ENCODE measurements at regions of chr1 and their contacts with region 1.

Region 1: GRCh38 chr1:225349826-225350225 is 78.0 kb downstream of the LBR start:
- DNase-seq: no peak
- H3K4me3 Mint-ChIP-seq: no peak overlapping the region
- H3K27ac Mint-ChIP-seq: peak overlapping the region; percentile 63
- H3K4me1 Mint-ChIP-seq: peaks cover 28% of the 10 kb centered on the region
- H3K27me3 Mint-ChIP-seq: no peaks in the 10 kb centered on the region
- CTCF ChIP-seq: no peak

Region 2: GRCh38 chr1:225378880-225379279 is 29.1 kb after region 1 on chr1:
- CTCF ChIA-PET with region 1: interaction called, 4 read pairs
- POLR2A ChIA-PET with region 1: interaction called, 10 read pairs
- intact Hi-C with region 1: no loop called
- DNase-seq: peak; percentile 83
- H3K4me3 Mint-ChIP-seq: no peak overlapping the region
- H3K27ac Mint-ChIP-seq: peak overlapping the region; percentile 21
- H3K4me1 Mint-ChIP-seq: peaks cover 6% of the 10 kb centered on the region
- H3K27me3 Mint-ChIP-seq: no peaks in the 10 kb centered on the region
- CTCF ChIP-seq: no peak

Region 3: GRCh38 chr1:225396357-225396756 is 46.5 kb after region 1 on chr1:
- CTCF ChIA-PET with region 1: no interaction called
- POLR2A ChIA-PET with region 1: no interaction called
- intact Hi-C with region 1: no loop called
- DNase-seq: no peak
- H3K4me3 Mint-ChIP-seq: no peak overlapping the region
- H3K27ac Mint-ChIP-seq: no peak overlapping the region
- H3K4me1 Mint-ChIP-seq: no peaks in the 10 kb centered on the region
- H3K27me3 Mint-ChIP-seq: no peaks in the 10 kb centered on the region
- CTCF ChIP-seq: no peak

Region 4: DNA sequence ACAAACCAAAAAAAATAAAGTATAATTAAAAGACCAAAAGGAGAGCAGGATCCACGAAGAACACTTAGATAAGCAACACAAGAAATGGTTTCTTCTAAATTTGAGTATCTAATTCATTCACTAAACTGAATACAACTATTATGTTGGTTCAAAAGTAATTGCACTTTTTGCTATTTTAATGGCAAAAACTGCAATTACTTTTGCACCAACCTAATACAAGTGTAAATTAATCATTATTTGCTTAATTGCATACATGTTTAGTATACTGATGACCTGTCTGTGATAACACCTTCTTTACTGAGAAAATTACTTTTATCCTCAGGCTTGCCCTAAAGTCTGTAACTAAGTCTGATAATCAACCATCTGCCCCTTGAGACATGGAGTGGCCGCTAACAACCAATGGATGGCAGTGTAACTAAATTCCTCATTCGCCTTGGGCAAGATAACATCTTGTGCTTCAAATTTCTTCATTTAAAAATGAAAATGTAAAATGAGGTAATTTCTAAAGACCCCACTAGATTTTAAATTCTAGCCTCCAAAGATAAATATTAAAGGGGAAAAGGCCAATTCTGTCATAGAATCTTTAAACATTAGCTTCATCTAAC is 217.9 kb after region 1 on chr1:
- CTCF ChIA-PET with region 1: no interaction called
- POLR2A ChIA-PET with region 1: no interaction called
- intact Hi-C with region 1: no loop called
- DNase-seq: peak; percentile 44
- H3K4me3 Mint-ChIP-seq: no peak overlapping the region
- H3K27ac Mint-ChIP-seq: no peak overlapping the region
- H3K4me1 Mint-ChIP-seq: peaks cover 13% of the 10 kb centered on the region
- H3K27me3 Mint-ChIP-seq: no peaks in the 10 kb centered on the region
- CTCF ChIP-seq: peak; percentile 20

Measured in MCF 10A (cell line).